CD8-positive, alpha-beta memory T cell (primary cell): ENCODE measurements at regions of chr1 and their contacts with region 1.

Region 1: GRCh38 chr1:28914228-28915030 is at the start of gene EPB41:
- DNase-seq: peak; percentile 86 to 91 (median 88)
- H3K4me3 ChIP-seq: peak within 1 kb of the TSS; percentile 98
- H3K4me3 Mint-ChIP-seq: peak within 1 kb of the TSS; percentile 97 to 100 (median 100)
- H3K27ac ChIP-seq: peak within 1 kb of the TSS; percentile 68
- H3K27ac Mint-ChIP-seq: peak within 1 kb of the TSS; percentile 89 to 97 (median 95)
- H3K4me1 ChIP-seq: peaks cover 47% of the 10 kb centered on the region
- H3K4me1 Mint-ChIP-seq: peaks cover 45 to 63% (median 46%) of the 10 kb centered on the region in 3 donors
- H3K27me3 ChIP-seq: no peaks in the 10 kb centered on the region
- H3K27me3 Mint-ChIP-seq: no peaks in the 10 kb centered on the region
- total RNA-seq, gene EPB41: 89.9 to 93.6 TPM

Region 2: DNA sequence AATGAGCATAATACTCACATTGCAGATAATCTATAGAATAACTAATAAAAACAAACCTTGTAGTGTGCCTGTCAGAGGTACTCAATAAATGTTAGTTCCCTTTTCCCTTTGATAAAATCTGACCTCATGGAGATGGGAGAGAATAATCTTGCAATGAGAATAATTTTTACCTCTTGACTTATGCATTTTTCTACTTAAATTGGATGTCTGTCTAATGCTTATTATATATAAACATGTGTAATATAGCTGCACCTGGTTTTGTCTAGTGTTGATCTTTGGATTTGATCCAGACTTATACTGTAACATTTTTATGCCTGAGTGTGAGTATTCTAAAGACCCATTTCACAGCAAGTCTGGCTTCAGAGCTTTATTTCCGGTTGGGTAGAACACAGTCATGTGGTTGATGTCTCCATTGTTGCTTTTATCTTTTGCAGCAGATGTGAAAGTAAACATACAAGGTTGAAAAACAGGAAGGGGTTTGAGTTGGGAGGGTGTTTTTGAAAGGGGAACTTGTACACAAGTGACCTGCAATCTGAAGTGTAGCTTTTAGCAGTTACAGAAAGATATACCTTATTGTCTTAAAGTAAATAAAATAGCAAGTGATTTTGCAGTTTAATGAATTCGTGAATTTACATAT is 12.3 kb after region 1 on chr1:
- CTCF ChIA-PET with region 1: interaction called, 11 read pairs
- POLR2A ChIA-PET with region 1: interaction called, 18 read pairs
- DNase-seq: peak in 4 of 5 donors; percentile 31 to 83 (median 68)
- H3K4me3 ChIP-seq: peak overlapping the region; percentile 23
- H3K4me3 Mint-ChIP-seq: peak overlapping the region; percentile 51 to 76 (median 68)
- H3K27ac ChIP-seq: peak overlapping the region; percentile 60
- H3K27ac Mint-ChIP-seq: peak overlapping the region; percentile 16 to 98 (median 84)
- H3K4me1 ChIP-seq: peaks cover 76% of the 10 kb centered on the region
- H3K4me1 Mint-ChIP-seq: peaks cover 61 to 86% (median 77%) of the 10 kb centered on the region in 3 donors
- H3K27me3 ChIP-seq: no peaks in the 10 kb centered on the region
- H3K27me3 Mint-ChIP-seq: no peaks in the 10 kb centered on the region

Region 3: DNA sequence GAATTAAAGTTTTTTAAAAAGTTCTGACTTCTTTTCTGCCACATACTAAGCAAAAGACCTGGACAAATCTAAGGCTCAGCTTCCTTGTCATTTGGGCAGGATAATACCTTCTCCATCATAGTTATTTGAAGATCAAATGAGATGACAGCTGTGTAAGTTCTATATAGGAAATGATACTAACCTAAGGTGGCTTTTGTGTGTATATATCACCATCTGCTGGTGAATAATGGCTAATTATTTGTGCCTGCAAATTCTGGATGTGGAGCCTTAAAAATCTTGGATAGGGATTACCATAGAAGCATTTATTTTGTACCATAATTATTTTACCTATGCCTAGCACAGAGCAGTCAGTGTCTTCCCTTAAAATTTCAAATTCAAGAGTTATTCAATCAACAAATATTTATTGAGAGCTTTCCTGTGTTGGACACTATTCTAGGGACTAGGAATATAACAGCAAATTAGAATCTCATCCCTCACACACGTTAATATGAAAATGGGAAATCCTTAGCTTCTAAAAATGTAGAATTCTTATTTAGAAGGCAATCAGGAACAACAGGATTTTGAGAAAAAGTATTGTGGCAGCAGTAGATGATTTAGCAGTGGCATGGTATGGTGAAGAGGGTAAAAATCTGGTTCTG is 119.5 kb after region 1 on chr1:
- CTCF ChIA-PET with region 1: interaction called, 21 read pairs
- POLR2A ChIA-PET with region 1: interaction called, 5 read pairs
- DNase-seq: peak in 2 of 5 donors; percentile 16 to 26
- H3K4me3 ChIP-seq: no peak overlapping the region
- H3K4me3 Mint-ChIP-seq: no peak overlapping the region
- H3K27ac ChIP-seq: no peak overlapping the region
- H3K27ac Mint-ChIP-seq: peak overlapping the region in 3 of 8 donors; percentile 18 to 51 (median 28)
- H3K4me1 ChIP-seq: no peaks in the 10 kb centered on the region
- H3K4me1 Mint-ChIP-seq: peaks cover 0 to 4% (median 3%) of the 10 kb centered on the region in 3 donors
- H3K27me3 ChIP-seq: no peaks in the 10 kb centered on the region
- H3K27me3 Mint-ChIP-seq: no peaks in the 10 kb centered on the region